ENCODE measurements at regions of chr17 and their contacts with region 1.

Region 1: GRCh38 chr17:549177-550040 is 165.2 kb downstream of the VPS53 start:
- DNase-seq: no peak
- H3K4me3 ChIP-seq: no peak overlapping the region
- H3K27ac ChIP-seq: no peak overlapping the region
- H3K4me1 ChIP-seq: no peaks in the 10 kb centered on the region
- H3K27me3 ChIP-seq: no peaks in the 10 kb centered on the region
- CTCF ChIP-seq: no peak

Region 2: DNA sequence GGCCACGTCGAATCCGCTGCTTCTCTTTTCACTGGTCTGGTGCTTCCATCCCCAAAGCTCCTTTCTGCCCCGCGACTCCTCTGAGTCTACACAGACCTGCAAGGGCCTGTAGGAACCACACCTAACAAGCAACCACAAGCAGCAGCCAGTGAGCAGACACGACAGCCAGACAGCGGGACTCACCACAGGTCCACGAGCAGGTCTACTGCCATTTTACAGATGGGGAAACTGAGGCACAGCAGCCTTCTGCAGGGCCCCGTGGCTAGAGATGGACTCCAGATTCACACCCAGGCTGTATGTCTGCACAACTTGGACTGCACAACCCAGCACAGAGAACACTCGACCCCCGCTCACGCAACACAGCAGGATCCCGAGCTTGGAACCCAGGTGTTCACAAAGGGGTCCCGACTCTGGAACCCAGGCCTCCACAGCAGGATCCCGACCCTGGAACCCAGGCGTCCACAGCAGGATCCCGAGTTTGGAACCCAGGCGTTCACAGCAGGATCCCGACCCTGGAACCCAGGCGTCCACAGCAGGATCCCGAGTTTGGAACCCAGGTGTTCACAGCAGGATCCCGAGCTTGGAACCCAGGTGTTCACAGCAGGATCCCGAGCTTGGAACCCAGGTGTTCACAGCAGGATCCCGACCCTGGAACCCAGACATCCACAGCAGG is 351.3 kb before region 1 on chr17:
- CTCF ChIA-PET with region 1: no interaction called
- POLR2A ChIA-PET with region 1: interaction called, 11 read pairs
- intact Hi-C with region 1: no loop called
- DNase-seq: no peak
- H3K4me3 ChIP-seq: no peak overlapping the region
- H3K27ac ChIP-seq: no peak overlapping the region
- H3K4me1 ChIP-seq: peaks cover 10% of the 10 kb centered on the region
- H3K27me3 ChIP-seq: no peaks in the 10 kb centered on the region
- CTCF ChIP-seq: no peak

Region 3: DNA sequence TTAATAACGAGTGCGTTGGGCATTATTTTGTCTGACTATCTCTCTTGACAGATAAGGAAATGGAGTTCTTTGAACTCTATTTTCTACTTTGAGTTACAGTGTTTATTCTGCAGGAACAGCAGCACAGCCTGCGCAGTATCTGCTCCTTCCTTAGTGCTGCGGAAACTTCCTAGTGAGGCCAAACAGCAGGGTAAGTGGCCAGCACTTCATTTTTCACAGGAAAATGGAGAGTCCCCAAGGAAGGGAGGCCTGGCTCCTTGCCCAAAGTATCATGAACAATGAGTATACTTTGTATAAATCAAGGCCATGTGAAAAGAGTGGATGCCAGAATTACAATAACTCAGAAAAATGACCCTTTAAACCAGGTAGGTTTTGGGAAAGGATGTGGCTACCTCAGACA is 24.7 kb after region 1 on chr17:
- CTCF ChIA-PET with region 1: no interaction called
- POLR2A ChIA-PET with region 1: no interaction called
- intact Hi-C with region 1: loop called (anchors 1 kb)
- DNase-seq: no peak
- H3K4me3 ChIP-seq: no peak overlapping the region
- H3K27ac ChIP-seq: no peak overlapping the region
- H3K4me1 ChIP-seq: no peaks in the 10 kb centered on the region
- H3K27me3 ChIP-seq: no peaks in the 10 kb centered on the region
- CTCF ChIP-seq: no peak